HCT116 (cell line): ENCODE measurements at regions of chr22 and their contacts with region 1.

Region 1: DNA sequence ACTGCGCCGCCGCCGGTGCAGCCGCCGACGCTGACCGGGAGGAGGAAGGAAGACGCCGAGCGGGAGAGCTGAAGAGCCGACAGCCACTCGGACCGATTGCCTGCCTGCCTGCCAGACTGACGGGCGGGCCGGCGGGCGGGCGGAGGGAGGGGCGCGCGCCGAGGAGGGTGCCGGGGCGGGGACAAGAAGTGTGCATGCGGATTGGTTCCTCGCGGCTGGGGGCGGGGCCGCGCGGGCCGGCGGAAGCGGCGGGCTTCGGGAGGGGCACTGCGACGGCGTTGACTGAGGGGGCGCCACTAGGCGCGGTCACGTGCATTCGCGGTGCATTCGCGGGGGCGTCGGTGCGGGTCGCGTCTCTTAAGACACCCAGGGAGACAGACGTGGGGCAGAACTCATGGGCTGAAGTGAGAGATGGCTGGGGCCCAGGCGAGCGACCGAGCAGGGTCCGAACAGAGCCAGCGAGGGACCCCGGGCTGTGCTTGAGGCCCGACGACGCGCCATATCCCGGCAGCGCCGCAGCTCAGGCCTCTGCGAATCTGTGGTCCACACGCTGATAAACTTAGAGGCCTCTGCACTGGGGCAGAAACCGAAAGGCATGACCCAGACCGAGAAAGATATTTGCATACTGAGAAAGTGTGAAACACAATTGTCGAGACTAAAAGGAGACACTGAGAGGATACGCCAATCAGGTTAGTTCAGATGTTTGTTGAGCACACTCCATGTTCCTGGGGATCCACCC is at the start of gene MAPK1:
- DNase-seq: peak; percentile 61
- ATAC-seq: peak; percentile 96
- H3K4me3 ChIP-seq: peak within 1 kb of the TSS; percentile 78 to 95
- H3K27ac ChIP-seq: peak within 1 kb of the TSS; percentile 90
- H3K4me1 ChIP-seq: peaks cover 14 to 28% of the 10 kb centered on the region in 2 experiments
- H3K27me3 ChIP-seq: no peaks in the 10 kb centered on the region
- CTCF ChIP-seq: peak in 1 of 3 experiments; percentile 19; a peak in 1 of 6 replicates
- POLR2A ChIP-seq: peak; percentile 82
- RAD21 ChIP-seq: no peak
- total RNA-seq, gene MAPK1: 137 TPM

Region 2: GRCh38 chr22:21108402-21109115 is 759.1 kb before region 1 on chr22:
- CTCF ChIA-PET with region 1: no interaction called
- POLR2A ChIA-PET with region 1: no interaction called
- RAD21 ChIA-PET with region 1: no interaction called
- intact Hi-C with region 1: no loop called
- DNase-seq: no peak
- ATAC-seq: no peak
- H3K4me3 ChIP-seq: no peak overlapping the region
- H3K27ac ChIP-seq: no peak overlapping the region
- H3K4me1 ChIP-seq: peaks cover 0 to 5% of the 10 kb centered on the region in 2 experiments; a peak in 1 of 4 replicates
- H3K27me3 ChIP-seq: no peaks in the 10 kb centered on the region
- CTCF ChIP-seq: no peak
- POLR2A ChIP-seq: no peak
- RAD21 ChIP-seq: no peak

Region 3: GRCh38 chr22:21652010-21652546 is 215.6 kb before region 1 on chr22:
- CTCF ChIA-PET with region 1: no interaction called
- POLR2A ChIA-PET with region 1: no interaction called
- RAD21 ChIA-PET with region 1: no interaction called
- intact Hi-C with region 1: loop called (anchors 5 kb)
- DNase-seq: peak; percentile 55
- ATAC-seq: peak; percentile 94
- H3K4me3 ChIP-seq: peak overlapping the region; percentile 67 to 83
- H3K27ac ChIP-seq: peak overlapping the region; percentile 73
- H3K4me1 ChIP-seq: peaks cover 7 to 22% of the 10 kb centered on the region in 2 experiments
- H3K27me3 ChIP-seq: no peaks in the 10 kb centered on the region
- CTCF ChIP-seq: no peak
- POLR2A ChIP-seq: no peak
- RAD21 ChIP-seq: no peak

Region 4: GRCh38 chr22:21963790-21964211 is 96.1 kb after region 1 on chr22:
- CTCF ChIA-PET with region 1: no interaction called
- POLR2A ChIA-PET with region 1: no interaction called
- RAD21 ChIA-PET with region 1: no interaction called
- intact Hi-C with region 1: no loop called
- DNase-seq: no peak
- ATAC-seq: no peak
- H3K4me3 ChIP-seq: no peak overlapping the region
- H3K27ac ChIP-seq: no peak overlapping the region
- H3K4me1 ChIP-seq: peaks cover 0 to 9% of the 10 kb centered on the region in 2 experiments; a peak in 3 of 4 replicates
- H3K27me3 ChIP-seq: no peaks in the 10 kb centered on the region
- CTCF ChIP-seq: no peak
- POLR2A ChIP-seq: no peak
- RAD21 ChIP-seq: no peak